ENCODE measurements at regions of chr19 and their contacts with region 1.

Region 1: GRCh38 chr19:45584332-45585157 is at the start of gene OPA3:
- DNase-seq: peak; percentile 100
- H3K4me3 ChIP-seq: peak within 1 kb of the TSS; percentile 56 to 90 (median 67)
- H3K27ac ChIP-seq: peak within 1 kb of the TSS; percentile 85
- H3K4me1 ChIP-seq: peaks cover 20% of the 10 kb centered on the region
- H3K27me3 ChIP-seq: no peaks in the 10 kb centered on the region
- CTCF ChIP-seq: no peak
- POLR2A ChIP-seq: peak; percentile 90
- total RNA-seq, gene OPA3: 13.8 and 15.4 TPM in 2 replicates

Region 2: DNA sequence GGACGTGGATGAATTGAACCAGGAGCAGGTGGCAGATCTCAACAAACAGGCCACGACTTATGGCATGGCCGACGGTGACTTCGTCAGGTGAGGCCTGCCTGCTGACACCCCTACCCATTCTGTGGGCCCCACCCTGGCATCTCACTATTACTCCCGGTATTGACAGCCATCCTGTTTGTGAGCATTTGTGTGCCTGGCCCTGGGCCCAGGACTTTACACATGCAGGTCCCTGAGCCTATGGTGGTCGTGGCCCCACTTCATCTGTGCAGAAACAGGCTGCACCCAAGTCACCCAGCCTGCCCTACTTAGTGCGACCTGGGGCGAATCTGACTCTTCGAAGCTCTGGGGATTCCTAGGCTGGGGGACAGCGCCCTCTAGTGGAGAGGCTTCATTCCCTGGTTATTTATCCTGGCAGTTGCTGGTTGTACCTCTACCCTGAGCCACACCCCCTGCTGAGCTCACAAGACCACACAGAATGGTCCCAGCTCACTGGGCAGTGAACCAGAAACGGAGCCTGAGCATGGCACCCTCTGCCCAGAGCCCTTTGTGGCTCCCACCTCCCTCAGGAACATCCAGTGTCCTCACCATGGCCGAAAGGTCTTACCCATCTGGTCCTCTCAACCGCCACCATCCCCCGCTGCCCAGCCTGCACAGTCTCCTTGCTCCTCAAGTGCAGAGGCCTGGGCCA is 525.1 kb before region 1 on chr19:
- CTCF ChIA-PET with region 1: no interaction called
- POLR2A ChIA-PET with region 1: no interaction called
- dilution Hi-C with region 1: no loop called
- intact Hi-C with region 1: no loop called
- DNase-seq: peak; percentile 75
- H3K4me3 ChIP-seq: no peak overlapping the region
- H3K27ac ChIP-seq: no peak overlapping the region
- H3K4me1 ChIP-seq: no peaks in the 10 kb centered on the region
- H3K27me3 ChIP-seq: no peaks in the 10 kb centered on the region
- CTCF ChIP-seq: peak; percentile 80 to 84
- POLR2A ChIP-seq: peak; percentile 31

Region 3: DNA sequence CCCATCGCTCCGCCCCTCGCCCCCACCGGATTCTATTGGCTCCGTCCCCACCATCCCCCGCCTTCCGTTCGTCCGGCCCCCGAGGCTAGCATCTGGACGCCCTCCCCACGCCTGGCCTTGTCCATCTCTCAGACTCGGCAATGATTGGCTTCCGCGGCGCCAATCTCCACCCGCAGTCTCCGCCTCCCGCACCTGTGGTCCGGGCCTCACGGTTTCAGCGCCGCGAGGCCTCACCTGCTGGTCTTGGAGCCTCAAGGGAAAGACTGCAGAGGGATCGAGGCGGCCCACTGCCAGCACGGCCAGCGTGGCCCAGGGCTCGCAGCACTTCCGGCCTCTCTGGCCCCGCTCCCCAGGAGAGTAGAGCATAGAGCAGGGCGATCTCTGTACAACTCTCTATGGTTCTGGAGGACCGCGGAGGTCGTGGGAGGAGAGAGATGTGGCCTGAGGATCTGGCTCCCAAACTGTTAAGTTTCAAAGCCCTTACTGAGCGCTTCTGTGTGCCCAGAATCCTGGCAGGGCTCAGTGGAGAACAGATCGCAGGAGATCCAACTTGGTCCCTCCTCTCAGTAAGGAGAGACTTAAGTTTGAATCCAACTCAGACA is 160.9 kb before region 1 on chr19 and contains the start of gene ERCC1:
- CTCF ChIA-PET with region 1: no interaction called
- POLR2A ChIA-PET with region 1: no interaction called
- dilution Hi-C with region 1: no loop called
- intact Hi-C with region 1: loop called (anchors 5 kb)
- DNase-seq: peak; percentile 94
- H3K4me3 ChIP-seq: peak within 1 kb of the TSS; percentile 59 to 74 (median 73)
- H3K27ac ChIP-seq: peak within 1 kb of the TSS; percentile 100
- H3K4me1 ChIP-seq: peaks cover 30% of the 10 kb centered on the region
- H3K27me3 ChIP-seq: no peaks in the 10 kb centered on the region
- CTCF ChIP-seq: no peak
- POLR2A ChIP-seq: peak; percentile 61
- total RNA-seq, gene ERCC1: 81.8 and 82.6 TPM in 2 replicates

Region 4: DNA sequence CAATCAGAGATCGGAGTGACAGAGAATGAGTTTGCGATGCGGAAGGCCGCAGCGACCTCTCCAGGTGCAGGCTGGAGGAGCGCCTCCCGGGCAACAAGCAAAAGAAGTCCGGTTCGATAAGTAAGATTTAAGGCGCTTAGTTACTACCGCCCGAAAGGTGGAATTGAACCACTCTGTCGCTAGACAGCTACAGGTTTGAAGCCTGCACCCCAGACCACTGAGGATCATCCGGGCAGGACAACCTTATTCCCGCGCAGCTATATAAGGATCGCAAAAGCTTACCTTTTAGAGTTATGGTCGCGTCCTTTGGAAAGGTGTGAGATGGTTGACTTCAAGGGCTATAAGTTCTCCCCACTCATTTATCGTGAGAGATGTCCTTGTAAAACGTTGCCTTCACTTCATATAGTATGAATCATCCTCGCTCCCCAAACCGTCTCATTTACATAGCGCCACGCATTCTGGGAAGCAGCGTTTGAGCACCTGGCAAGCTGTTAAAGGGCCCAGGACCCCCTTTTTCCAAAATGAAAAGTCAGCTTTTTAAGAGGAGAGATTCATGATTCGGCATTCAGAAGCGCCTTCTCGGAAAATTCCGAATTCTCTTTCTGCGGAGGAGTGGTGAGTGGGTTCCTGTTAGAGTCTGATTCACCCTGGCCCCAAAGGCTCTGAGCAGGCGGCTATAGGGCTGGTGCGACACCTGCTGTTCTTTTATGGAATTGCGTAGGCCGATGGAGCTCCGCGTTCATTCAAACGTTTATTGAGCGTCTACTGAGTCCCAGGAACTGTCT is 105.9 kb before region 1 on chr19:
- CTCF ChIA-PET with region 1: no interaction called
- POLR2A ChIA-PET with region 1: no interaction called
- dilution Hi-C with region 1: no loop called
- intact Hi-C with region 1: no loop called
- DNase-seq: peak; percentile 92
- H3K4me3 ChIP-seq: peak overlapping the region; percentile 13 to 71 (median 46)
- H3K27ac ChIP-seq: peak overlapping the region; percentile 96
- H3K4me1 ChIP-seq: peaks cover 3% of the 10 kb centered on the region
- H3K27me3 ChIP-seq: no peaks in the 10 kb centered on the region
- CTCF ChIP-seq: peak; percentile 91 to 95
- POLR2A ChIP-seq: no peak

Region 5: GRCh38 chr19:45601524-45602374 is 17.2 kb after region 1 on chr19 and contains the start of gene GPR4:
- CTCF ChIA-PET with region 1: no interaction called
- POLR2A ChIA-PET with region 1: interaction called, 3 read pairs
- dilution Hi-C with region 1: no loop called
- intact Hi-C with region 1: loop called (anchors 1 kb)
- DNase-seq: no peak
- H3K4me3 ChIP-seq: peak within 1 kb of the TSS; percentile 53 to 84 (median 80)
- H3K27ac ChIP-seq: peak within 1 kb of the TSS; percentile 9
- H3K4me1 ChIP-seq: peaks cover 52% of the 10 kb centered on the region
- H3K27me3 ChIP-seq: no peaks in the 10 kb centered on the region
- CTCF ChIP-seq: no peak
- POLR2A ChIP-seq: peak; percentile 59
- total RNA-seq, gene GPR4: 26.7 and 30.3 TPM in 2 replicates

Region 6: GRCh38 chr19:45615795-45616708 is 31.5 kb after region 1 on chr19:
- CTCF ChIA-PET with region 1: no interaction called
- POLR2A ChIA-PET with region 1: interaction called, 4 read pairs
- dilution Hi-C with region 1: no loop called
- intact Hi-C with region 1: loop called (anchors 1 kb)
- DNase-seq: peak; percentile 99
- H3K4me3 ChIP-seq: peak overlapping the region; percentile 37 to 61 (median 52)
- H3K27ac ChIP-seq: peak overlapping the region; percentile 72
- H3K4me1 ChIP-seq: peaks cover 17% of the 10 kb centered on the region
- H3K27me3 ChIP-seq: no peaks in the 10 kb centered on the region
- CTCF ChIP-seq: no peak
- POLR2A ChIP-seq: peak; percentile 66